Caco-2 (cell line): ENCODE measurements at regions of chr1 and their contacts with region 1.

Region 1: GRCh38 chr1:160006312-160006940 is 25.4 kb downstream of the PIGM start:
- DNase-seq: peak; percentile 81 to 86
- H3K4me3 ChIP-seq: no peak overlapping the region
- H3K4me3 Mint-ChIP-seq: no peak overlapping the region
- H3K27ac Mint-ChIP-seq: no peak overlapping the region
- H3K4me1 ChIP-seq: no peaks in the 10 kb centered on the region; the same call in 1 of the 2 replicates
- H3K4me1 Mint-ChIP-seq: peaks cover 8% of the 10 kb centered on the region
- H3K27me3 ChIP-seq: no peaks in the 10 kb centered on the region
- H3K27me3 Mint-ChIP-seq: no peaks in the 10 kb centered on the region
- CTCF ChIP-seq: peak; percentile 94 to 98

Region 2: GRCh38 chr1:159214149-159214760 is 792.2 kb before region 1 on chr1:
- CTCF ChIA-PET with region 1: interaction called, 3 read pairs
- POLR2A ChIA-PET with region 1: no interaction called
- intact Hi-C with region 1: loop called (anchors 5 kb)
- DNase-seq: peak; percentile 47 to 65
- H3K4me3 ChIP-seq: no peak overlapping the region
- H3K4me3 Mint-ChIP-seq: no peak overlapping the region
- H3K27ac Mint-ChIP-seq: no peak overlapping the region
- H3K4me1 ChIP-seq: no peaks in the 10 kb centered on the region
- H3K4me1 Mint-ChIP-seq: peaks cover 10% of the 10 kb centered on the region
- H3K27me3 ChIP-seq: no peaks in the 10 kb centered on the region
- H3K27me3 Mint-ChIP-seq: peaks cover 9% of the 10 kb centered on the region
- CTCF ChIP-seq: peak; percentile 89

Region 3: DNA sequence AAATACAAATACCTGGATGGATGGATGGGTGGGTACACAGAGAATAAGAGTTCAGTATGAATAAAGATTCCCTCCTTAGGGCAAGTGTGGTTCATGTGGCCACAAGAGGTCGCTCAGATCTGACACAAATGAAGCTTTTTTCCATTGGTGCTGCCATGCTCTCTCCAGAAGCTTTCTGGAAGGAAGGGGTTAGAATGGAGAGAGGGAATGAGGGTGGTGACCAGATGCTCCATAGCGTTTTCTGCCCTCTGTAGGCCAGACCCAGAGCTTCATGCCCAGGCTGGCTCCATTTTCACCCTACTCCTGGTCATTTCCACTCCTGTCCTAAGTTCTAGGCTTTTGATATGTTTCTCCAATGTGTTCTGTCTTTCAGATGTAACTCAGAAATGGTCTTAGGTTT is 207.5 kb before region 1 on chr1:
- CTCF ChIA-PET with region 1: interaction called, 68 read pairs
- POLR2A ChIA-PET with region 1: no interaction called
- intact Hi-C with region 1: loop called (anchors 1 kb)
- DNase-seq: peak; percentile 78 to 79
- H3K4me3 ChIP-seq: no peak overlapping the region
- H3K4me3 Mint-ChIP-seq: no peak overlapping the region
- H3K27ac Mint-ChIP-seq: no peak overlapping the region
- H3K4me1 ChIP-seq: no peaks in the 10 kb centered on the region
- H3K4me1 Mint-ChIP-seq: no peaks in the 10 kb centered on the region
- H3K27me3 ChIP-seq: no peaks in the 10 kb centered on the region
- H3K27me3 Mint-ChIP-seq: peaks cover 14% of the 10 kb centered on the region
- CTCF ChIP-seq: peak; percentile 69 to 84

Region 4: GRCh38 chr1:159891275-159892157 is 114.9 kb before region 1 on chr1:
- CTCF ChIA-PET with region 1: interaction called, 64 read pairs
- POLR2A ChIA-PET with region 1: interaction called, 4 read pairs
- intact Hi-C with region 1: loop called (anchors 1 kb)
- DNase-seq: peak; percentile 74 to 81
- H3K4me3 ChIP-seq: no peak overlapping the region
- H3K4me3 Mint-ChIP-seq: no peak overlapping the region
- H3K27ac Mint-ChIP-seq: no peak overlapping the region
- H3K4me1 ChIP-seq: peaks cover 16% of the 10 kb centered on the region
- H3K4me1 Mint-ChIP-seq: peaks cover 13% of the 10 kb centered on the region
- H3K27me3 ChIP-seq: no peaks in the 10 kb centered on the region
- H3K27me3 Mint-ChIP-seq: no peaks in the 10 kb centered on the region
- CTCF ChIP-seq: peak; percentile 86 to 97

Region 5: DNA sequence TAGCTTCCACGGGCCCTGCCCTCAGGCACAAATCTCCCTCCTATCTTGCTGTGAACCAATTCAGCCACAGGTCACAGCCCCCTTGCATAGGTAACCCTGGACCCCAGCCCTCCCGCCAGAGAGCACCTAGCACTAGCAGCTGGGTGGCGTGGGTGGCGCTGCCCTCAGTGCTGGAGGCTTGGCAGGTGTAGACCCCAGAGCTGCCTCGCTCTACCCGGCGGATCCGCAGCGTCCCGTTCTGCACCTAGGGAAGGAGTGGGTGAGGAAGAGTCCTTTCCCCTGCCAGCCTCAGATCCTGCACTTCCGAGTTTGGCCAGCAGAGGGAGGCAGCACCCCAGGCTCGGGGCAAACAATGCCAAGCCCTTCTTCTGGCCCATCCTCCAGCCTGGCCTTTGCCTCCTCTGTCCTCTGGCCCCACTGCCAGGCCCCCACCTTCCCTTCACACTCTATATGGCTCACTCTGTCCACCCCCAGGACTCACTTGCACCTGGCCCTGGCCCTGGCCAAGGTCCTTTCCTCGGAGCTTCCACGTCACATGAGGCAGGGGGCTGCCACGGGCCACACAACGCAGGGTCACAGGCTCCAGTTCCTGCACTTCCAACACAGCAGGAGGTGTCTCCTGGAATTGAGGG is 70.0 kb before region 1 on chr1:
- CTCF ChIA-PET with region 1: interaction called, 129 read pairs
- POLR2A ChIA-PET with region 1: interaction called, 3 read pairs
- intact Hi-C with region 1: loop called (anchors 1 kb)
- DNase-seq: peak; percentile 85 to 92
- H3K4me3 ChIP-seq: no peak overlapping the region
- H3K4me3 Mint-ChIP-seq: no peak overlapping the region
- H3K27ac Mint-ChIP-seq: no peak overlapping the region
- H3K4me1 ChIP-seq: peaks cover 65% of the 10 kb centered on the region
- H3K4me1 Mint-ChIP-seq: peaks cover 54% of the 10 kb centered on the region
- H3K27me3 ChIP-seq: no peaks in the 10 kb centered on the region
- H3K27me3 Mint-ChIP-seq: no peaks in the 10 kb centered on the region
- CTCF ChIP-seq: peak; percentile 96 to 99

Region 6: DNA sequence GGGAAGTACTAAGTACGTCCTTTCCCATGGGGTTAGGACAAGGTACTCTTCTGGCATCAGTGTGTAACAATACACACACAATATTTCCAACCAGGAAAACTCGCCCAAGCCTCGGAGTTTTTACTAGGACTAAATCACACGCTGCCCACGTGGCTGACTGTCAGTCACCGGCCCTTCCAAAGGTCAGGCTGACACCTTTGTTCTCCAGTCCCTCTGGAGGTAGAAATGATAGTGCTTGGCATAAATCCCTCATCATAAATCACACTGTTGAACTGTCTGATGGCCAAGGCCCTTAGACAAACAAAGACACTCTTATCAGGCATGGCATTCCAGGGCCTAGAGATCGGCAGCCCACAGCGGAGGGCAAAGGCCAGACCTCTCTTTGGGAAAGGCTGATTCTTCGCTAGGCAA is 35.5 kb before region 1 on chr1:
- CTCF ChIA-PET with region 1: interaction called, 10 read pairs
- POLR2A ChIA-PET with region 1: no interaction called
- intact Hi-C with region 1: loop called (anchors 1 kb)
- DNase-seq: peak; percentile 92 to 95
- H3K4me3 ChIP-seq: no peak overlapping the region
- H3K4me3 Mint-ChIP-seq: peak overlapping the region; percentile 12
- H3K27ac Mint-ChIP-seq: peak overlapping the region; percentile 83
- H3K4me1 ChIP-seq: peaks cover 44% of the 10 kb centered on the region
- H3K4me1 Mint-ChIP-seq: peaks cover 20% of the 10 kb centered on the region
- H3K27me3 ChIP-seq: no peaks in the 10 kb centered on the region
- H3K27me3 Mint-ChIP-seq: no peaks in the 10 kb centered on the region
- CTCF ChIP-seq: peak; percentile 9 to 29

Region 7: GRCh38 chr1:160031365-160032164 is 25.1 kb after region 1 on chr1 and contains the start of gene PIGM:
- CTCF ChIA-PET with region 1: interaction called, 9 read pairs
- POLR2A ChIA-PET with region 1: interaction called, 14 read pairs
- intact Hi-C with region 1: loop called (anchors 2 kb)
- DNase-seq: peak; percentile 95 to 96
- H3K4me3 ChIP-seq: peak within 1 kb of the TSS; percentile 96
- H3K4me3 Mint-ChIP-seq: peak within 1 kb of the TSS; percentile 80
- H3K27ac Mint-ChIP-seq: peak within 1 kb of the TSS; percentile 71
- H3K4me1 ChIP-seq: peaks cover 6% of the 10 kb centered on the region
- H3K4me1 Mint-ChIP-seq: peaks cover 15% of the 10 kb centered on the region
- H3K27me3 ChIP-seq: no peaks in the 10 kb centered on the region
- H3K27me3 Mint-ChIP-seq: peaks cover 4% of the 10 kb centered on the region
- CTCF ChIP-seq: no peak
- total RNA-seq, gene PIGM: 5.5 and 5.7 TPM in 2 replicates